RWPE1 (cell line): ENCODE measurements at regions of chr17 and their contacts with region 1.

Region 1: DNA sequence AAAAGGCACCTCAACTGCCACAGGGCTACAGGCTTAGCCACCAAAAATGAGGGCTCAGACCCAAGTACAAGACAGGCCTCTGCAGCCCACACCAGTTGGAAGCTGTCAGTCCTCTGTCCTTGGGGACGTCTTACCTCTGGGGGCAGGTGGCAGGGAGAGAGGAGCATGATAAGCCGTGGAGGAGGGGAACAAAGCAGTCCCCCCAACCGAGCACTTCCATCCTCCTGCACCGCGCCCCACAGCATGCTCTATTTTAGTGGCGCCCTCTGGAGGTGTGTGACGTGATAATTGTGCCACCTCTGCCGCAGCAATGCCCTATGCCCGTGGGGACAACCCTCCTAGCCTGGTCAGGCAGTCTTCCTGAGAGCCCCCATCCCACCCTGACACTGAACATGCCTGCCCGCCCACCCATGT is 13.6 kb downstream of the G6PC3 start:
- DNase-seq: no peak
- H3K27ac ChIP-seq: peak overlapping the region; percentile 90
- CTCF ChIP-seq: peak; percentile 42; the same call in 1 of the 2 replicates

Region 2: GRCh38 chr17:44115585-44116415 is 31.7 kb after region 1 on chr17:
- CTCF ChIA-PET with region 1: interaction called, 14 read pairs
- POLR2A ChIA-PET with region 1: interaction called, 3 read pairs
- DNase-seq: no peak
- H3K27ac ChIP-seq: peak overlapping the region; percentile 31
- CTCF ChIP-seq: peak; percentile 72